ENCODE measurements at regions of chr11 and their contacts with region 1.

Region 1: DNA sequence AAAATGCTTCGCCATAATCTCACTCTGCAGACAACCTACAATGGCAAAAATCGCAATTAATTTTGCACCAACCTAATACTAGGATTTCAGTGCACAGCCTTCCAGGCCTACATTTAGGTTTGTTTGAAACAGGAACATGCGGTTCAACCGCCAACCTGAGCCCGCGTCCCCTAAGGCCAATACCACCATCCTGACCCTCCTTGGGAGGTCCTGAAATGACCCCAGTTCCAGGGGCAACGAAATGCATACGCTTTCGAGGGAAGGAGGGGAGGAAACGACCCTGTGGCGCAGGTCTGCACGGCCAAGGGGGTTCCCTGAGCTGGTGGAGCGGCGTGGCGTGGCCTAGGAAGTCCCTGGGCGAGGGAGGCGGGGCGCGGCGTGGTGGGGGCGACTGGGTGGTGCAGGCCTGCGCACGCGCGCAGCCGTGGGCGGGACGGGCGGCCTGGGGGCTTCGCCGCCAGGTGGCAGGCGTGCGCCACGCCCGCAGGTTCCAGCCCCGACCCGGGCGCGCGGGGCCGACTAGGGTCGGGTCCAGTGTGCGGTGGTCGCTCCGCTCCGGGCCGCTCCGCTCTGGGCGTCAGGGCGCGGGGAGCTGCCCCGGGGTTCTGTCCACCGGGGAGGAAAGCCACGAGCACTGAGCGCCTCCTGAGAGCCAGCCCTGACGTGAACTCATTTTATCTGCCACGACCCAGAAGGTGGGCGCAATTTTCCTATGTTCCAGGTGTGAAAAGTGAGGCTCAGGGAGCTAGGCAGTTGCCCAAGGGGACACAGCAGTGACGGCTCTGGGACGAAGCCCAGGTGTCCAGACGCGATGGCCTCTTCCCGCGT is 94.1 kb downstream of the SWAP70 start:
- DNase-seq: peak; percentile 92
- H3K4me3 ChIP-seq: peak overlapping the region; percentile 77
- H3K27ac ChIP-seq: peak overlapping the region; percentile 66
- H3K4me1 ChIP-seq: peaks cover 80% of the 10 kb centered on the region
- CTCF ChIP-seq: peak; percentile 77

Region 2: GRCh38 chr11:9681583-9682372 is 76.2 kb before region 1 on chr11:
- CTCF ChIA-PET with region 1: no interaction called
- POLR2A ChIA-PET with region 1: interaction called, 10 read pairs
- intact Hi-C with region 1: no loop called
- DNase-seq: peak; percentile 59
- H3K4me3 ChIP-seq: peak overlapping the region; percentile 30
- H3K27ac ChIP-seq: peak overlapping the region; percentile 81
- H3K4me1 ChIP-seq: peaks cover 96% of the 10 kb centered on the region
- CTCF ChIP-seq: no peak

Region 3: DNA sequence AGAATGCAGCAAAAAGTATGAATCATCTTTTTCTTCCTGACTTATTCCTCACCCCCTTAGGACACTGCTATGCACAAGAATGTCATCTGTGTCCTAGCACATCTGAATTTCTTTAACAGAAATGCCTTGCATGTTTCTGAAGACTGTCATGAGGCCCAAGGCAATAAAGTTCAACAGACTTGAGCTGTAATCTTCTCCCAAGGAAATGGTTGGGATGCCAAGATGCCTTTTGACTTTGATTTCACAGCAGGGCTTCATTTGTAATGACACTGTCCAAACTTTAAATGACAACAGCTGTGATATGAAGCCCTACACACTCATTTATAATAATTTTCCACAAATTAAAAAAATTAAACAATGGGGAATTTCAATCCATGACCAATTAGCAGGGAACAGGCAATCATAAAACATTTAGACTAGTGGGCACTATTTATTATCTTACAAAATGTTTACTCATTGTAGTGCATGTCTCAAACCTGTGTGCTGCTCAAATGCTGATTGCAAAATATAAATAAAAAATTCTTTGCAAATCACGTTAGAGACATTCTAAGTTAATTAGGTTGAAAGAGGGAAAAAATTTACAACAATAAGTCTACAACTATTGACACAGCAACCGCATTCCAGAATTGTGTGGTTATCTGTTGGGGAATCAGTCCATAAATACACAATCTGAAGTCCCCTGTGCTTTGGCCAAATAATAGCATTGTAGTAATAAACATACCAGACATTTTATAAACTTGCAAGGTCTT is 148.2 kb after region 1 on chr11:
- CTCF ChIA-PET with region 1: no interaction called
- POLR2A ChIA-PET with region 1: no interaction called
- intact Hi-C with region 1: no loop called
- DNase-seq: no peak
- H3K4me3 ChIP-seq: no peak overlapping the region
- H3K27ac ChIP-seq: no peak overlapping the region
- H3K4me1 ChIP-seq: no peaks in the 10 kb centered on the region
- CTCF ChIP-seq: no peak

Region 4: GRCh38 chr11:9972989-9973388 is 215.0 kb after region 1 on chr11:
- CTCF ChIA-PET with region 1: interaction called, 4 read pairs
- POLR2A ChIA-PET with region 1: interaction called, 3 read pairs
- intact Hi-C with region 1: loop called (anchors 1 kb)
- DNase-seq: peak; percentile 73
- H3K4me3 ChIP-seq: no peak overlapping the region
- H3K27ac ChIP-seq: no peak overlapping the region
- H3K4me1 ChIP-seq: no peaks in the 10 kb centered on the region
- CTCF ChIP-seq: peak; percentile 92

Region 5: GRCh38 chr11:10307442-10308207 is 549.6 kb after region 1 on chr11:
- CTCF ChIA-PET with region 1: interaction called, 5 read pairs
- POLR2A ChIA-PET with region 1: no interaction called
- intact Hi-C with region 1: loop called (anchors 2 kb)
- DNase-seq: peak; percentile 83
- H3K4me3 ChIP-seq: peak overlapping the region; percentile 62
- H3K27ac ChIP-seq: peak overlapping the region; percentile 93
- H3K4me1 ChIP-seq: peaks cover 97% of the 10 kb centered on the region
- CTCF ChIP-seq: peak; percentile 99